HAP-1 (cell line): ENCODE measurements at regions of chr10 and their contacts with region 1.

Region 1: DNA sequence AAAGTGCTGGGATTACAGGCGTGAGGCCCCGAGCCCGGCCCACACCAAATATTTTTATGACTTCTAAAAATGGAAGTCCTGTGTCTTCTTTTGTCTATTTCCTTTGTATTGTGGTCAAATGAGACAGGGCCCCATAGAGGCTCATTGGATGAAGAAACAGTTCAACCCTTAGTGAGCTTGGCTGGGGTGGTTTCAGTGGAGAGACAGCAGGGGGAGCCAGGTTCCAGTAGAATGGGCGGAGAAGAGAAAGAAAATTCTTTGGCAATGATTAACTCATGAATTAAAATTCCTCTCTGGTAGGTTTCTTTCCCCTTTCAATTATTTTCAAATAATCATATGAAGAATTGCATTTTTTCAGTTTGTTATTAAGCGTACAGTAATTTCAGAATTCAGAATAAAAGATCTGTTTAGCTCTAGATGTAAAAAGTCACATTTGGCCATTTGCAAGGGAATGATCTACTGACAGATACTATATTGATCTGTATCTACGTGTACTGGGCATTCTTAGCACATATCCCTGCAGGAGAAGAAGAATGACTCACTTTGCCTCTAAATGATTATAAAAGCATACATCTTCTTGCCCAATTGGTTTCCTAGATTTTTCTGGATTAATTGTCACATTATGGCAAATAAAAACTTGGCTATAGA is 43.2 kb downstream of the PNLIPRP3 start:
- DNase-seq: peak; percentile 15 to 56
- H3K4me3 ChIP-seq: no peak overlapping the region
- H3K4me1 ChIP-seq: no peaks in the 10 kb centered on the region
- H3K27me3 ChIP-seq: no peaks in the 10 kb centered on the region; the same call in 1 of the 2 replicates

Region 2: GRCh38 chr10:116382290-116382689 is 88.6 kb before region 1 on chr10:
- in situ Hi-C with region 1: no loop called
- DNase-seq: no peak
- H3K4me3 ChIP-seq: no peak overlapping the region
- H3K4me1 ChIP-seq: no peaks in the 10 kb centered on the region
- H3K27me3 ChIP-seq: peaks cover 15% of the 10 kb centered on the region

Region 3: DNA sequence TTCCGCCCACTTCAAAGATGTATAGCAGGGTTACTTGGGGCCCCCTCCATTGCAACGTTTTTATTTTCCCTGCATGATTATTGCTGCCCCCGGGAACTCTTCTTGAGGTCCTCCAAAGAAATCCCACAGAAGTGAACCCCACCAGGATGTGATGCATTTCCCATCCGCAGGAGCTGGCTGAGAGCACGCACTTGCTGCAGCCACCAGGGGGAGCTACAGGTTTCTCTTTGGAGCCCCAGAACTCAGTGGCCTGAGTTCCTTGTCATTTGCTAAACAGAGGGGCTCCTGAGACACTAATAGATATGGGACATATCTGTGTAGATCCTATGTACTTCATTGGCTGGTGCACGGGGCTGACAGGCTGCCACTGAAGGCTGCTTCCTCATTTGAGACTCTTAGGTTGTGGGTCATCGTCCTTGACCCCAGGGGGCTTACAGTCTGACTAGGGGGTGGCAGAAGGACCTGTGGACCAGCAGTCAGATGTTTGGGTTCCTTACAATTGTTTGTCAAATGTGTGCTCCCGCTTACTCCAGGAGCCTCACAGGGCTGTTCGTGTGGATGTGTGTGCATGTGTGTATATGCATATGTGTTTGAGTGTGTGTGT is 326.1 kb after region 1 on chr10:
- in situ Hi-C with region 1: loop called (anchors 25 kb)
- DNase-seq: peak; percentile 56 to 91
- H3K4me3 ChIP-seq: no peak overlapping the region
- H3K4me1 ChIP-seq: no peaks in the 10 kb centered on the region
- H3K27me3 ChIP-seq: no peaks in the 10 kb centered on the region